ENCODE measurements at regions of chr3 and their contacts with region 1.

Region 1: GRCh38 chr3:4833471-4833870 is 145.8 kb upstream of the BHLHE40 start:
- DNase-seq: no peak
- ATAC-seq: no peak

Region 2: DNA sequence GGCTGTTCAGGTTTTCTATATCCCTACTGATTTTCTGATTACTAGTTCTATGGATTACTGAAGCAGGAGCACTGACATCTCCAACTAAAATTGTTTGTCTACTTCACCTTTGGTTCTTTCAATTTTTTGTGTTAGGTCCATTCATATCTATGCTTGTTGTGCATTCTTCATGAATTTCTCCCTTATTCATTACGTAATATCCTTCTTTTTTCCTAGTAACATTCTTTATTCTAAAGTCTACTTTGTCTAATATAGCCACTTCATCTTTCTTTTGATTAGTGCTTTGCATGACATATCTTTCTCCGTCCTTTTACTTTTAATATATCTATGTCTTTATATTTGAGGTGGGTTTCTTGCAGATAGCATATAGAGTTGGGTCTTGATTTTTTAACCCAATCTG is 29.5 kb after region 1 on chr3:
- intact Hi-C with region 1: loop called in 1 of 2 experiments (anchors 1 kb)
- DNase-seq: no peak
- ATAC-seq: no peak